Activated CD4-positive, alpha-beta memory T cell treated with anti-CD3 and anti-CD28 coated beads for 36 hours (primary cell): ENCODE measurements at regions of chr1 and their contacts with region 1.

Region 1: GRCh38 chr1:246971090-246971721 is 36.7 kb downstream of the ZNF695 start:
- DNase-seq: peak; percentile 57
- H3K4me3 Mint-ChIP-seq: no peak overlapping the region
- H3K27ac Mint-ChIP-seq: no peak overlapping the region
- H3K4me1 Mint-ChIP-seq: no peaks in the 10 kb centered on the region
- H3K27me3 Mint-ChIP-seq: peaks cover 2% of the 10 kb centered on the region

Region 2: GRCh38 chr1:246907472-246907871 is 63.7 kb before region 1 on chr1:
- CTCF ChIA-PET with region 1: interaction called, 9 read pairs
- POLR2A ChIA-PET with region 1: no interaction called
- intact Hi-C with region 1: loop called (anchors 1 kb)
- DNase-seq: no peak
- H3K4me3 Mint-ChIP-seq: no peak overlapping the region
- H3K27ac Mint-ChIP-seq: no peak overlapping the region
- H3K4me1 Mint-ChIP-seq: no peaks in the 10 kb centered on the region
- H3K27me3 Mint-ChIP-seq: no peaks in the 10 kb centered on the region

Region 3: DNA sequence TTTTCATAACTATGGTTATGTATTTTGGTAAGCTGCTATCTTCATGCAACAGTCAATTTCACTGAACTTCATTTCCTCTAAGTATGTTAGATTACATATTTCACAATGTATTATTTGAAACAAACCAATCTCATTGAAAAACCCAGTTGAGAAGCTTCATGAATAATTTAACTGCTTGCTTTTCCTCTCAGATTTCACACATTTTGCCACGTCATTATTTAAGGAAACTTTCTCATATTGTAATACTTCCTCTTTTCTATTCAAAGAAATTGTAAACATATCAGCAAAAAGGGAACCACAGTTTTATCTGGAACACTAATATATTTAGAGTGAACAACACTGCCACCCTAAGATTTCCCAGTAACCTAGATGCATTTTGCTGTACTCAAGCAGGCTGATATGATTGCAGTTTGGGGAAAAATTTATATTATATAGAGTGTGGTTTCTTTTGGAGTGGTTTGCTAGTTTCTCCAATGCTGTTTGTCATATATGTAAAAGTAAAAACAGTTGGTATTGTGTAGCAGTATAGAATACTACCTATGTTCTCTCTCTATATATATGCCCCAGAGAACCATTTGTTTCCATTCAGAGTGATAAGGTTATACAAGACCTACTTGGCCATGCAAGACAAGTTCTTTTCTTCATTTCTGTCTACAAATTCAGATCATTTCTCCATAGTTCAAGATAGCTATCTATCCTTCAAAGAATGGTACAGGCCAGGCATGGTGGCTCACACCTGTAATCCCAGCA is 11.1 kb before region 1 on chr1:
- CTCF ChIA-PET with region 1: interaction called, 15 read pairs
- POLR2A ChIA-PET with region 1: no interaction called
- intact Hi-C with region 1: no loop called
- DNase-seq: no peak
- H3K4me3 Mint-ChIP-seq: no peak overlapping the region
- H3K27ac Mint-ChIP-seq: no peak overlapping the region
- H3K4me1 Mint-ChIP-seq: peaks cover 6% of the 10 kb centered on the region
- H3K27me3 Mint-ChIP-seq: peaks cover 7% of the 10 kb centered on the region

Region 4: DNA sequence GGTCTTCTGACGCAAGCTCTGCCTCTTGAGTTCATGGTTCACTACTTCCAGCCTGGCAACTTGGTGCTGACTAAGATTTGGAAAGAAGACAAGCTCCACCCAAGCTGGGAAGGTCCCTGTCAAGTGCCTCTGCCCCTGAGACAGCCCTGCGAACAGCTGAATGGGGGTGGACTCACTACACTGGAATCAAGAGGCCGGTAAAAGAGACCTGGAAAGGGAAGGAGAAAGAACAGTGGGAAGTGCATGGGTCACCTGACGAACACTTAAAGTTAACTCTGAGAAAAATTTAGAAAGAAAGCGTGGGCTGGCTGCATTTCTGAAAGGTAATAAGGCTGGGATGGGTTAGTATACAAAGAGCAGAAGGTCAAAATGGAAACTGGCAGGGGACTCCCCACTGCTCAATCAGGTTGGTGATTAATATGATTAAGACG is 386.6 kb after region 1 on chr1:
- CTCF ChIA-PET with region 1: no interaction called
- POLR2A ChIA-PET with region 1: no interaction called
- intact Hi-C with region 1: no loop called
- DNase-seq: peak; percentile 22
- H3K4me3 Mint-ChIP-seq: no peak overlapping the region
- H3K27ac Mint-ChIP-seq: no peak overlapping the region
- H3K4me1 Mint-ChIP-seq: peaks cover 6% of the 10 kb centered on the region
- H3K27me3 Mint-ChIP-seq: peaks cover 46% of the 10 kb centered on the region